Keratinocyte (primary cell): ENCODE measurements at regions of chr5 and their contacts with region 1.

Region 1: DNA sequence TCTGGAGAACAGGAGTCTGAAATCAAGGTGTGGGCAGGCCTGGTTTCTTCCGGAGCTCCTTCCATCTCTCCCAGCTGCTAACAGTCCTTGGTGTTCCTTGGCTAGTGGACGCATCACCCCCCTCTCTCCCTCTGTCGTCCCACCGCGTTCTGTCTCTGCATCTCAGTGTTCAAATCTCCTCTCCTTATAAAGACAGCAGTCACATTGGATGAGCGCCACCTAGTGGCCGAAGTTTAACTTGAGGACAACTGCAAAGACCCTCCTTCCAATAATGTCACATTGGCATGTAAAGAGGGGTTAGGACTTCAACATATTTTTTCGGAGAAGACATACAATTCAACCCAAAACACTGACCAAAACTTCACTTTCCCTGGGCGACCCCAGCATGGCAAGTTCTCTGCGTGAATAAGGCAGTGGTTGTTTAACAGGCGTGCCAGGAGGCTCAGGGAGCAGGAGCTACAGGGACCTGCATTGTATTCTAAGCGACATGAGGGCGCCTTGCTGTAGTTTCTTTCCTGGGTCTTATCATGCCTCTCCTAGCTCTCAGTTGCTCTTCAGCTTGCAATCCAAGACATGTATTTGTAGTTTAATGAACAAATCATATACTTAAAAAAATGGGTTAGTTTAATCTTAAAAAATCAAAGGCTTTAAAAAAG is 27.9 kb upstream of the BASP1 start:
- DNase-seq: peak; percentile 45
- H3K4me3 ChIP-seq: no peak overlapping the region
- H3K27ac ChIP-seq: no peak overlapping the region
- H3K4me1 ChIP-seq: peaks cover 38% of the 10 kb centered on the region
- H3K27me3 ChIP-seq: no peaks in the 10 kb centered on the region
- CTCF ChIP-seq: peak; percentile 75 to 88 (median 82)

Region 2: DNA sequence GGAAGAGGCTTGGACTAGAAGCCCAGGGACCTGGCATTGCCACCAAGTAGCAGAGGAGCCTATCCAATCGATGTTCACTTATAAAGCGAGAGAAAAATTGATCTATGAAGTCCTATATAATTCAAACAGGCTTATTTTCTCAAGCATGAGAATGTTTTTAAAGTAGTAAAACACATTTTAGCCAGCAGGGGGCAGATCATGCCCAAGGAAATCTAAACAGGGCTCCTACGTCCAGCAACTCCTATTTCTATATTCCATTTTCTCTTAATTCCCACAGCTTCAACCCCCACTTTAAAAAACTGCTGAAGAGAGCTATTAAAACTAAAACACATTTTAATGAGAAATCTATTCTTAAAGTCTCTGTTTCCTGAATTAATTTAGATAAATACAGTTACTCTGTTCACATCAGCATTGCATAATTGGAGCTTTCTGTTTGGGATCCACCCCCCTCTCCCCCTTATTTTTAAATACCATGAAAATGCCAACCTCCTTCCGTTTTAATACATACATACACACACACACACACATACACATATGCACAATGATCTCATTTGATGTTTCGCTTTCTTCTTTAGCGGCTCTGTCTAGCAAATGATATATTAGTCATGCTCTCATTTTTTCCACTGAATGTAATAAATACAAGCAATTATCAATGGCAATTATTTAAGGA is 398.3 kb before region 1 on chr5:
- dilution Hi-C with region 1: loop called (anchors 10 kb)
- DNase-seq: no peak
- H3K4me3 ChIP-seq: no peak overlapping the region
- H3K27ac ChIP-seq: peak overlapping the region; percentile 10
- H3K4me1 ChIP-seq: peaks cover 3% of the 10 kb centered on the region
- H3K27me3 ChIP-seq: no peaks in the 10 kb centered on the region
- CTCF ChIP-seq: peak; percentile 39 to 49 (median 44)

Region 3: DNA sequence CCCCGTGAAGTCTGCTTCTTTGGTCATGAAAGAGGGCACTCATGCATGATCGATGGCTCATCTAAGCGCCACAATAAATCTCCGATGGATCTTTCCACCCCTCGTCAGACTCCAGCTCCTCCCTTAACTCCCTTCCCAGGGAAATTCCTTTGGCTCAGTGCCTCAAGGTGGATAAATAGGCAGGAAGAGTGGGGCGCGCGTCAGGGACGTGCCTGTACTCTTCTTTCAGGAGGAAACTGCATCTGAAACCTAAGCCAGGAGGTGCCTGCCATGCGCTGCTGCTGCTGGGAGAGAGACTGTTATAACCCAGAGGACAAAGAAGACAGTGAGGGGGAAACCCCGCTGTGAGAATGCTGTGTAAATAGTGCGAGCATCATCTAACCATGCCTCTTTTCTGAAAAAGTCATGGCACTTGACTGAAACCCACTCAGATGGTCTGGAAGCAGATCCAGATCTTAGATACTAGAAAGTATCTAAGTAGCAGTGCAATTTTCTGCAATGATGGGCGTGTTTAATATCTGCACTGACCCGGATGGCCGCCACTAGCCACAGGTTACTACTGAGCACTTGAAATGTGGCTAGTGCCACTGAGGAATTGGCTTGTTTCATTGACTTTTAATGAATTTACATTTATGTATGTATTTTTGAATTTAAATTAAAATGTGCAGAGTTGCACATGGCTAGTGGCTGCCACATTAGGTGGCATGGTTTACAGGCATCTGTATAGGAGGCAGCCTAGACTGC is 92.4 kb before region 1 on chr5:
- dilution Hi-C with region 1: no loop called
- DNase-seq: no peak
- H3K4me3 ChIP-seq: no peak overlapping the region
- H3K27ac ChIP-seq: no peak overlapping the region
- H3K4me1 ChIP-seq: peaks cover 10% of the 10 kb centered on the region
- H3K27me3 ChIP-seq: no peaks in the 10 kb centered on the region
- CTCF ChIP-seq: no peak